ENCODE measurements at regions of chr10 and their contacts with region 1.

Region 1: DNA sequence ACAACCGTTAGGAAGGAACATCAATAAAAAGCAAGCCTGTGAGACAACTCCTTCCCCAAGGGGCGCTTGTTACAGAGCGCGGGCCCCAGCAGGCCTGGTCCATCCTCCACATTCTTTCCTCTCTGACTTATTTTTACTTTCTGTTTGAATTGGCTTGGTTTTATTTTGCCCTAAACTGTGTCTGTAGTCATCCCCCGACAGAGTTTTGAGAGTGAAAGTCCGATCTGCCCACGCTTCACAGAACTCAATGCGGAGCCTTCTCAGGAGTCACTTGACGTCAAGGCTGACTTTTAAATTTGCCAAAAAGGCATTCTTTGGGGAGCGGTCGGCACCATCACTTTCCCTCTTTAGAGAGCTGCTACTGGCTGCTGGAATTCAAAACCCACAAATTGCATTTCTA is 150.1 kb upstream of the KLF6 start:
- DNase-seq: peak; percentile 92
- H3K4me3 Mint-ChIP-seq: peak overlapping the region; percentile 10
- H3K27ac Mint-ChIP-seq: peak overlapping the region; percentile 88
- H3K4me1 Mint-ChIP-seq: peaks cover 40% of the 10 kb centered on the region
- H3K27me3 Mint-ChIP-seq: no peaks in the 10 kb centered on the region

Region 2: DNA sequence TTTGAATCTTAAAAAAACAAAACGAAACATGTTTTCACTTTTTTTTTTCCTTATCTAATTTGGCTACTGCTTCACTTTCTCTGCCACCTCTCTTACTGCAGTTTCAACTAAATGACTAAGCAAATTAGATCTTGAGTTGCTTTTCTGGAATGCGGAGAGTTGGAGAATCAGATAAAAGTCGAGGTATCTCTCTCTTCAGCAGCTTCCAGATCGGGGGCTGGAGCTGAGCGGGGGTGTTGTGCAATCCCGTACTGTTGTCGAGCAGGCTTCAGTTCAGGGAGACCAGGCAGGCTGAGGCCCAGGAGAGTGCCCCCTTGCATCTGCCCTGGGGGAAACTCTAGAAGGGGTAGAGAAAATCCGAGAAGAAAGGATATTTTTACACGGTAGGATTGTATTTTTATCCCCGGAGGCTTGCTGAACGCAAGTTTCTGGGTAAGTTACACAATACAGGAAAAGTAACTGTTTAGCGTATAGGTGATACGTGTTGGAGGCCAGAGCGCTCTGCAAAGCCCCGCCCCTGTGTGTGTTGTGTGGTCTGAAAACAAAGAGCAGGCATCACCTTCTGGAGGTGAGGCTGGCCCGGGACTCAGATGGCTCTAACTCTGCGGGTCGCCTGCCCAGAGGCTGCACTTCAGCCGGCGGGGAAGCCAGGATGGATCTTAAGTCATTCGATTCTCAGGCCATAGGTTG is 266.7 kb before region 1 on chr10:
- CTCF ChIA-PET with region 1: no interaction called
- intact Hi-C with region 1: loop called (anchors 5 kb)
- DNase-seq: peak; percentile 75
- H3K4me3 Mint-ChIP-seq: peak overlapping the region; percentile 74
- H3K27ac Mint-ChIP-seq: peak overlapping the region; percentile 84
- H3K4me1 Mint-ChIP-seq: peaks cover 37% of the 10 kb centered on the region
- H3K27me3 Mint-ChIP-seq: no peaks in the 10 kb centered on the region

Region 3: DNA sequence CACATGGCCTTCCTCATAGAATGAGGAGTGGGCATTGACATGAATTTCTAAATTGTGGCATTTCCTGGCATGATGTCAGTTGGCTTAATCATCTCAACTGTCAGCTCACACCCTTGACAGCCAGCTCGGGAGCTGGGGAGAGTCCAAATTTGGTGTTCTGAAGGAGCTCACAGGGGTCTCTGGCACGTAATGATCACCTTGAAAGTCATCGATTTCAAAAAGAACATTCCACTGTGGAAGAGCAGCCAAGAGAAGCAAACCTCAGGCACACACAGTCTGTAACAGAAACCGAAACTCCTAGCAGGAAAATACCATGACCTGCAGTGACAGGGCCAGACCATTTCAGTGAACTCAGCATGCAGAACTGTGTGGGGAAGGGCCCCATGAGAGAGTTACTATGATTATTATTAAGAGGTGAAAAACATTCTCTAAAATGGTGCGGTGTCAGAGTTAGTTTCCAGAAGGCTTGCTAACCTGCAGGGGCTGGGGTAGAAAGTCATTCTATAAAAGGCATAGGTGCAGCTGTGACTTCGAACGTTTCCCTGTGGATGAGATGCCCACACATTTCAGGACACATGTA is 123.8 kb before region 1 on chr10:
- CTCF ChIA-PET with region 1: interaction called, 3 read pairs
- intact Hi-C with region 1: loop called (anchors 1 kb)
- DNase-seq: peak; percentile 82
- H3K4me3 Mint-ChIP-seq: peak overlapping the region; percentile 52
- H3K27ac Mint-ChIP-seq: peak overlapping the region; percentile 96
- H3K4me1 Mint-ChIP-seq: peaks cover 76% of the 10 kb centered on the region
- H3K27me3 Mint-ChIP-seq: no peaks in the 10 kb centered on the region

Region 4: GRCh38 chr10:3852147-3852904 is 82.8 kb before region 1 on chr10:
- CTCF ChIA-PET with region 1: no interaction called
- intact Hi-C with region 1: loop called (anchors 1 kb)
- DNase-seq: peak; percentile 85
- H3K4me3 Mint-ChIP-seq: no peak overlapping the region
- H3K27ac Mint-ChIP-seq: peak overlapping the region; percentile 88
- H3K4me1 Mint-ChIP-seq: peaks cover 49% of the 10 kb centered on the region
- H3K27me3 Mint-ChIP-seq: no peaks in the 10 kb centered on the region

Region 5: GRCh38 chr10:3873728-3874461 is 61.2 kb before region 1 on chr10:
- CTCF ChIA-PET with region 1: interaction called, 3 read pairs
- intact Hi-C with region 1: loop called (anchors 1 kb)
- DNase-seq: no peak
- H3K4me3 Mint-ChIP-seq: no peak overlapping the region
- H3K27ac Mint-ChIP-seq: peak overlapping the region; percentile 36
- H3K4me1 Mint-ChIP-seq: peaks cover 52% of the 10 kb centered on the region
- H3K27me3 Mint-ChIP-seq: no peaks in the 10 kb centered on the region

Region 6: GRCh38 chr10:3972460-3973301 is 37.5 kb after region 1 on chr10:
- CTCF ChIA-PET with region 1: interaction called, 3 read pairs
- intact Hi-C with region 1: loop called (anchors 2 kb)
- DNase-seq: peak; percentile 51
- H3K4me3 Mint-ChIP-seq: peak overlapping the region; percentile 62
- H3K27ac Mint-ChIP-seq: peak overlapping the region; percentile 92
- H3K4me1 Mint-ChIP-seq: peaks cover 44% of the 10 kb centered on the region
- H3K27me3 Mint-ChIP-seq: no peaks in the 10 kb centered on the region

Region 7: DNA sequence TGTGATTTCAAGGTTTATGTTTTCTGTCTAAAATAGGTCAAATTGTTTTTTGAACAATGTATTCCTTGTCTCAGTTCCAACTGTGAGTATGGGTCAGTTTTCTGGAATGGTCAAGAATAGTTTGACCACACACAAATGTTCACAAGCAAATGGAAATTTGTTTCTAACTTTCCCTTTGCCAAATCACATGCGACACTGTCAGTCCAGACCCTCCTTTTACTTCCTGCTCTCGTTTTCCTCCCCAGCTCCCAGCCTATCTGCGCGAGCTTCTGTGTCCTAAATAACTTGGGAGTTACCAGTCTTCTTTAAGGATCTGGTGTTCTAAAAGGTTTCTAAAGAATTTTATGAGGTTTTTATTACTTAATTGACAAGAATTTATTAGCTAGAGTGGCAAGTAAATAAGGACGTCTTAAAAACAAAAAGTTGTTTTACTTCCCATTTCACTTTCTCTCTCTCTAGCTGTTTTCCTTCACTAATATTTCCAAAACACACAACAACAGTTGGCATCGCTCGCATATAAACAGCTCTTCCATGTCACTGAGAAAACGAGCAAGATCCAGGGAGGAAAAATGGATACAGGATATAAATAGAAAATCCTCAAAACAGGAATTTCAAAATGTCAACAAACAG is 116.0 kb after region 1 on chr10:
- CTCF ChIA-PET with region 1: no interaction called
- intact Hi-C with region 1: no loop called
- DNase-seq: no peak
- H3K4me3 Mint-ChIP-seq: no peak overlapping the region
- H3K27ac Mint-ChIP-seq: no peak overlapping the region
- H3K4me1 Mint-ChIP-seq: peaks cover 2% of the 10 kb centered on the region
- H3K27me3 Mint-ChIP-seq: no peaks in the 10 kb centered on the region

Measured in activated naive CD4-positive, alpha-beta T cell treated with anti-CD3 and anti-CD28 coated beads for 36 hours (primary cell).